BJ (cell line): ENCODE measurements at regions of chrX and their contacts with region 1.

Region 1: DNA sequence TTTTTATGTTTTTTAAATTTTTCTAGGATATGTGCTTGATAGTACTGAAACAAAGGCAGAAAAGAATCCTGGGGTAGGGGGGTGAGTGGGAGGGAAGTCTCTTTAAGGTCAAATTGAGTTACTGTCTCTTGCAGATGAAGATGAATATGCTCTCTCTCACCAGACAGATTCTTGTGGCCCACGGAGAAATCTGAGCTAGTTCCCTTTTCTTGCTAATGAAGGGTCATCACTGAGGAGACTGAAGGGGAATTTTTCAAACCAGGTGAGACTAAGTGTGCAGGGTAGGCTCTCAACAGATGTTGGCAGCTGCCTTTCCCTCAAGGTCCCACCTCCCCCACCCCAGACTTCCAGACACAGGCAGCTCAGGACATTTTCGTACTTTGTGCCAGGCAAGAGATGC is 21.5 kb downstream of the FAM9C start:
- DNase-seq: no peak
- H3K4me3 ChIP-seq: no peak overlapping the region
- H3K27me3 ChIP-seq: no peaks in the 10 kb centered on the region
- CTCF ChIP-seq: no peak

Region 2: GRCh38 chrX:13298836-13299235 is 275.9 kb after region 1 on chrX:
- CTCF ChIA-PET with region 1: no interaction called
- POLR2A ChIA-PET with region 1: interaction called, 17 read pairs
- DNase-seq: no peak
- H3K4me3 ChIP-seq: no peak overlapping the region
- H3K27me3 ChIP-seq: no peaks in the 10 kb centered on the region
- CTCF ChIP-seq: no peak